PC-9 (cell line): ENCODE measurements at regions of chrX and their contacts with region 1.

Region 1: DNA sequence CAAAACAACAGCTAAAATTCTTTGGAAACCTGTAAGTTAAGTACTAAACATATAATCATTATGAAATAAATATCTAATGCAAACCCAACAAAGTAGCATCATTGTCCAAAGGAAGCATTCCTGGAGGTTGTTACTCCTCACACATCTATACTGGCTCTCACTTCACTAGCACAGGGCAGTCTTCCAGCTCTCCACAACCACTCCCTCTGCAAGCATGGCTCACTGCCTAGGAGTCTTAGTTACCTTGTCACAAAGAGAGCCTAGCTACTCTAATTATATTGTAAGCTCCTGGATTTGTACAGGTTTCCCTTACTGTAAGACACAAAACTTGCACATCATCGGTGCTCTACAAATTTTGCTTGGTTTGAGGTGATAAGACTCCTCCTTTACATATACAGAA is 76.1 kb downstream of the AMMECR1 start:
- DNase-seq: peak in 1 of 2 experiments; percentile 8
- H3K4me3 ChIP-seq: no peak overlapping the region
- H3K27ac ChIP-seq: no peak overlapping the region
- H3K4me1 ChIP-seq: no peaks in the 10 kb centered on the region
- H3K27me3 ChIP-seq: no peaks in the 10 kb centered on the region
- CTCF ChIP-seq: no peak

Region 2: DNA sequence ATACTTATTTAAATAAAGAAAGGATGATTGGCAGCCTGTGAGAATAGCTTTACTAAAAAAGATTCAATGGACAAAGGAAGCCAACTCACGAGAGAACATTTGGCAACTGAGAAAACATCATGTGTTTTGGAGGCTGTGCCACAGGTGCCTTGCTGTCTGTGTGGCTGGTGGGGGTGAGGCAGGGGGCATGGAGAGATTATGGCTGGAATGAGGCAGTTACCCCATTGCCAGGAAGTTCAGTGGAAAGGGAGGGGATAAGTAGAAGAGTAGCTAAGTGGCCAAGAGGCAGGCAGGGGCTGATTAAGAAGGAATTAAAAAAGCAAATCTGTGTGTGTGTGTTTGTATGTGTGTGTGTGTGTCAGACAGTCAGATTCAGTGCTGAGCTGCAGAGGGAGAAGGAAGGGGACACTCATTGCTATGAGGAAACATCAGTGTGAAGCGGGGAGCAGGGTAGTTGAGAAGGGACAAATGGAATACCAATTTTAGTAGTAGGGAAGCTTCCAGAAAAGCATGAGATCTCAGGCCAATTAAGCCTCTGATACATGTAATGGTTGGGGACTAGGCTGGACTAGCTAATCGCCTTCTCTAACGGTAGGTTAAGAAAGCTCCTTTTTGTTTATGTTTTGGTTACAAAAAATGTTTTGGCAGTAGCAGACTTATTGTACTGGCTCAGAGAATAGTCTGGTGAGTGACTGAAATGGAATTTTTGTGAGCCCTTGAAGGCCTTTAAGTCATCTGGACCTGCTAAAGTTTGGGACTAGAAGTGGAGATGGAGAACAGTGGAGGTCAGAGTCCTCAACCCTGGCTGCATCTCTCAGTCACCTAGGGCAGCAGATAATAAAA is 220.4 kb before region 1 on chrX:
- CTCF ChIA-PET with region 1: interaction called, 22 read pairs
- POLR2A ChIA-PET with region 1: no interaction called
- intact Hi-C with region 1: no loop called
- DNase-seq: no peak
- H3K4me3 ChIP-seq: no peak overlapping the region
- H3K27ac ChIP-seq: no peak overlapping the region
- H3K4me1 ChIP-seq: peaks cover 10% of the 10 kb centered on the region
- H3K27me3 ChIP-seq: no peaks in the 10 kb centered on the region
- CTCF ChIP-seq: no peak

Region 3: DNA sequence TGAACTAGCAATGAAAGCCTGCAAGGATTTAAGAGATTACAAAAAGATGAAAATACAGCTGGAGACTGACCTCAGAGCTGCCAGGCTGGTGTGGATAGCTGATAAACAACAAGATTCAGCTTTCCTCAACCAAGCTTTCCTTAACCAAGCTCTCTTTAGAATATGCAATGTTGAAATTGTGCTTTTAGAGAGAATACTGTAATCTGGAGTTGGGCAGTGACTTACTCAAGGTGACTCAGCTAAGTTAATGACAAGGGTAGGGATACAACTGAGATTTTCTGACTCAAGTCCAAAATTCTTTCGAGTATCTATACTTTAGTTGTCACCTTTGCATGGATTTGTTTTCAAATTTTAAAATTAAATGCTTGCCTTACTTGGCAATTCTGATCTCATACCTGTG is 21.9 kb before region 1 on chrX:
- CTCF ChIA-PET with region 1: no interaction called
- POLR2A ChIA-PET with region 1: interaction called, 11 read pairs
- intact Hi-C with region 1: no loop called
- DNase-seq: peak in 1 of 2 experiments; percentile 60
- H3K4me3 ChIP-seq: no peak overlapping the region
- H3K27ac ChIP-seq: peak overlapping the region; percentile 69
- H3K4me1 ChIP-seq: peaks cover 21% of the 10 kb centered on the region
- H3K27me3 ChIP-seq: no peaks in the 10 kb centered on the region
- CTCF ChIP-seq: no peak